Dendritic cell treated with granulocyte-macrophage colony-stimulating factor and Interleukin-4, amounts not matched to agents 40 ng/mL and 50 ng/mL, for 4 days (primary cell): ENCODE measurements at regions of chr1 and their contacts with region 1.

Region 1: DNA sequence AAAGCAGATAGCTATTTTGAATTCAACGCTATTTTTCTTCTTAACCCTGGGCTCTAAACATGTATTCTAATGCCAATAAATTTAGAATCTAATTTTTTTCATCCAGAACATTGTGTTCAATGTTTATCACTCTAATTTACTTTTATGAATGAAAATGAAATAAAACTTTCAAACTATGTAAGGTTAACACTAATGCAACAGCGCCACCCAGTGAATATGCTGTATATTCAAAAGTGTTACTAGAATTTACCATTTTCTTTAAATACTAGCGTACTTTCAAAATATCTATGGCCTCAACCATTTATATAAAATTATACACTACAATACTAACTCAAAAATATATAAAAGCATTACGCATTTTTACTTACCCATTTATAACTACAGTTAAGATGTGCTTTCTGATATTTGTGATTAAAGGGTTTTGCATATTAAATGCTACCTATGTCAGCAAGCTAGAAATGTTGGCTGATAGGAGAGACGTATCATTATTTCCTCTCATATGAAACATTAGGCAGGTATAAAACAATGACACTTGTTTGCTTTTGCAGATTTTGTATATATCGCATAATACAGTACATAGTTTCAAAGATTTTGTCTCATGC is 5.9 kb upstream of the NUF2 start:
- H3K4me3 Mint-ChIP-seq: no peak overlapping the region
- H3K27ac Mint-ChIP-seq: no peak overlapping the region
- H3K4me1 Mint-ChIP-seq: peaks cover 3% of the 10 kb centered on the region
- H3K27me3 Mint-ChIP-seq: no peaks in the 10 kb centered on the region

Region 2: DNA sequence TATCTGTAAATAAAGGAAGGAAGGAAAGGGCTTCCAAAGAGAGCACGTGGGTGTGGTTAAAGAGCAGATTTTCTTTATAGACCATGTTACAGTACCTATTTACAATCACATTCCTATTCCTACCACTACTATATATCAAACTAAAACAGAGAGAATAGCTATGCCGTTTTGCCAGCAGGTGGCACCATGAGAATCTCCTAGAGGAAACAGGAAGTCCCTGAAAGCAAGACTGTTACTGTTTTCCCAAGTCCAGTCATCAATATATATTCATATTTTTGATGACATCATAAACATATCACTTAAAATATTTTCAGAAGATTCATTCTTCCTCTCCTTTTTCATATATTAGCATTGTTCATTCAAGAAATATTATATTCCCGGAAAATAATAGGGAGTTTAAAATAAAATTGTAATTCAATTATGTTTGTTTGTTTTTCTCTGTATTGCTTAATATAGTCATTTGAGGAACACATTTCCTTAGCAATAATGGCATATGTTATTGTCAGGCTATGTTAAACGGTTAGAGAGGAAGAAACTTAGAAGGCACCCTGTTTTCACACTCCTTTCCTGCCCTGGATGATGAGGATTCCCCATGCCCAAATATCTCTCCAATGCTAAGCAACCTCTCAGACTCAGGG is 461.5 kb before region 1 on chr1:
- intact Hi-C with region 1: loop called (anchors 2 kb)
- H3K4me3 Mint-ChIP-seq: no peak overlapping the region
- H3K27ac Mint-ChIP-seq: no peak overlapping the region
- H3K4me1 Mint-ChIP-seq: no peaks in the 10 kb centered on the region
- H3K27me3 Mint-ChIP-seq: peaks cover 4% of the 10 kb centered on the region

Region 3: GRCh38 chr1:162878000-162878596 is 437.8 kb before region 1 on chr1:
- intact Hi-C with region 1: loop called (anchors 1 kb)
- H3K4me3 Mint-ChIP-seq: no peak overlapping the region
- H3K27ac Mint-ChIP-seq: no peak overlapping the region
- H3K4me1 Mint-ChIP-seq: peaks cover 7% of the 10 kb centered on the region
- H3K27me3 Mint-ChIP-seq: peaks cover 26% of the 10 kb centered on the region

Region 4: DNA sequence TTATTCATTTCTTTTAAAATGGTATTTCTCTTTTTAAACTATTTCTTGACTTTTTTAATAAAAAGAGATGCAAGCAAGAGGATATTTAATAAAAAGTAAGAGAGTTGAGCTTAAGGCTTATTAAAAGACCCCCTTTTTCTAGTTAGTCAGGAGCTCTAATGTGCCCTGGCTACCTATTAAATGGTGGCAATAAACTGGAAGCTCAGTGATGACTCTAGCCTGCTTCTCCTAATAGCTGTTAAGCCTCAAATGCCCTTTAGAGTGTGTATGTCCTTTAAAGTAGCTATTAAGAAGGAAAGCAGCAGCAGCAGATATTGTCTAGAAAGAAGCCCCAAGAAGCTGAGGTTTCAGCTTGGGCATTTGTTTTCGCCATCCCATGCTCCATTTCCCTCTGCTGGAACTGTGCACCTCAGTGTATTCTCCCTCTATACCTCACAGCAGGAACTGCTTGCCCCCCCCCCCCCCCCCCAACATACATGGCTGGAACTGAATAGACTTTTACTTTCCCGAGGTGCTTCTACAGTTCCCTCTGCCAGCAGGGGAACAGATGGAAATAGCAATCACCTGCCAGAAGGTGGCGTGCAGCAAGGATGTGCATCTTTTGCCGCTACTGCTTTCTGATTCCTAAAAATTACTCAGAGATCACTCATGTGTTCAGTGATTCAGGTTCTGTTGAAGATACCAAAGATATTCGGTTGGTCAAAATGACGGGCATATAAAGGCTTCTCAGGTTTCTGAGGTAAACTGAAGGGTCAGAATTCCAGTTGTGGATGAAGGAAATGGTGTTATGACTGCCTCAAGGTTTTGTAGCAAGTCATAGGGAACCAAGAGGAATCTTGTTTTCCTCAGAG is 244.2 kb before region 1 on chr1:
- intact Hi-C with region 1: loop called (anchors 2 kb)
- H3K4me3 Mint-ChIP-seq: no peak overlapping the region
- H3K27ac Mint-ChIP-seq: no peak overlapping the region
- H3K4me1 Mint-ChIP-seq: no peaks in the 10 kb centered on the region
- H3K27me3 Mint-ChIP-seq: peaks cover 19% of the 10 kb centered on the region

Region 5: GRCh38 chr1:163174524-163175437 is 141.1 kb before region 1 on chr1:
- intact Hi-C with region 1: loop called (anchors 10 kb)
- H3K4me3 Mint-ChIP-seq: no peak overlapping the region
- H3K27ac Mint-ChIP-seq: no peak overlapping the region
- H3K4me1 Mint-ChIP-seq: no peaks in the 10 kb centered on the region
- H3K27me3 Mint-ChIP-seq: peaks cover 2% of the 10 kb centered on the region